Heart left ventricle (tissue), 16 donors: ENCODE measurements at regions of chr3 and their contacts with region 1.

Region 1: DNA sequence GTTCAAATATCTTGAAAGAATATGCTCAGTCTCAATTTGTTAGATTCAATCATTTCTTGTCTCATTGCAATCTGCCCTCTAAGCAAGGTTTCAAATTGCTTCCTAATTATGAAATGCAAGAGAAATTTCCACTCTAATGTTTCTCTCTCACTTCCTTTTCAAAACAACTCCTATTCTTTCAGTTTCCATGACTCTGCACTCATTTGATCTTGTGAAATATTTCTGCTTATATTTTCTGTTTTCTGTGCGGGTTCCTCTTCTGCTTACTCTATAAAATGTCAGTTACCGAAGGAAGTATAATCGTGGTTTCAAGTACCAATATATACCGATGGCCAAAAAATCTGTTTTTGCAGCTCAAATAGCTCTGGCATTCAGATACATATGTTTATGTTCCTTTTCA is 521.9 kb upstream of the NAALADL2 start:
- DNase-seq: no peak
- ATAC-seq: peak in 2 of 4 donors; percentile 46 to 65
- H3K4me3 ChIP-seq: no peak overlapping the region
- H3K27ac ChIP-seq: peak overlapping the region in 3 of 12 donors; percentile 25 to 82 (median 35)
- H3K4me1 ChIP-seq: peaks cover 0 to 14% (median 0%) of the 10 kb centered on the region in 12 donors
- H3K27me3 ChIP-seq: no peaks in the 10 kb centered on the region
- CTCF ChIP-seq: no peak
- POLR2A ChIP-seq: no peak

Region 2: DNA sequence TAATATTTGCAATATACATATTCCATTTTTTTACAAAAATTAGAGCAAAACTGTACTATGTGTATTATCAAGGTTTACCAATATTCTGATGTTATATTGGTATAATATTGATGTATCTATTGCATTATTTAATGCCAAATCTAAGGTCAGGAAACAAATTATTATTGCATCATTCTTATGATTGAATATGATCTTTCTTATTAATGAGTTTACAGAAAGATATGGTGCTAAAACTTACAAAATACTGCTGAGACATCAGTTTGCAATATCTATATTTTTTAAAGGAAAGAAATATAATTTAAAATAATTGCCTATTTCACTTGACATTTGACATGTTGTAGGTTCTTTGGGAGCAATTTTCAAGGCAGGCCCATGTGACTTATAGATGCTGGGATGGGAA is 582.1 kb before region 1 on chr3:
- intact Hi-C with region 1: loop called in 1 of 10 experiments (anchors 5 kb)
- DNase-seq: no peak
- ATAC-seq: no peak
- H3K4me3 ChIP-seq: no peak overlapping the region
- H3K27ac ChIP-seq: no peak overlapping the region
- H3K4me1 ChIP-seq: no peaks in the 10 kb centered on the region
- H3K27me3 ChIP-seq: no peaks in the 10 kb centered on the region
- CTCF ChIP-seq: no peak
- POLR2A ChIP-seq: no peak

Region 3: DNA sequence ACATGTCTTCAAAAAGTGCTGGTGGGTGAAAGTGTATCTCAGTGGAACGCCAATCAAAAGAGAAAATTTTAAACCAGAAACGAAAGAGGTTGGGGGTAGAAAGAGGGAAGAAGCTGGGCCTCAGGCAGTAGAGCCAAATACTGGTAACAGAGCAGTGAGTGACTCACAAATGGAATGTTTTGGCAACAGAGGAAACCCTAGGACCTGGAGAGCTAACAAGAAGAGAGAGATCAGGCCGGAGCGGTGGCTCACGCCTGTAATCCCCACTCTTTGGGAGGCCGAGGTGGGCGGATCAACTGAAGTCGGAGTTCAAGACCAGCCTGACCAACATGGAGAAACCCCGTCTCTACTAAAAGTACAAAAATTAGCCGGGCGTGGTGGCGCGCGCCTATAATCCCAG is 71.1 kb after region 1 on chr3:
- intact Hi-C with region 1: no loop called
- DNase-seq: peak in 1 of 5 donors; percentile 32
- ATAC-seq: no peak
- H3K4me3 ChIP-seq: no peak overlapping the region
- H3K27ac ChIP-seq: no peak overlapping the region
- H3K4me1 ChIP-seq: no peaks in the 10 kb centered on the region
- H3K27me3 ChIP-seq: no peaks in the 10 kb centered on the region
- CTCF ChIP-seq: no peak
- POLR2A ChIP-seq: no peak

Region 4: DNA sequence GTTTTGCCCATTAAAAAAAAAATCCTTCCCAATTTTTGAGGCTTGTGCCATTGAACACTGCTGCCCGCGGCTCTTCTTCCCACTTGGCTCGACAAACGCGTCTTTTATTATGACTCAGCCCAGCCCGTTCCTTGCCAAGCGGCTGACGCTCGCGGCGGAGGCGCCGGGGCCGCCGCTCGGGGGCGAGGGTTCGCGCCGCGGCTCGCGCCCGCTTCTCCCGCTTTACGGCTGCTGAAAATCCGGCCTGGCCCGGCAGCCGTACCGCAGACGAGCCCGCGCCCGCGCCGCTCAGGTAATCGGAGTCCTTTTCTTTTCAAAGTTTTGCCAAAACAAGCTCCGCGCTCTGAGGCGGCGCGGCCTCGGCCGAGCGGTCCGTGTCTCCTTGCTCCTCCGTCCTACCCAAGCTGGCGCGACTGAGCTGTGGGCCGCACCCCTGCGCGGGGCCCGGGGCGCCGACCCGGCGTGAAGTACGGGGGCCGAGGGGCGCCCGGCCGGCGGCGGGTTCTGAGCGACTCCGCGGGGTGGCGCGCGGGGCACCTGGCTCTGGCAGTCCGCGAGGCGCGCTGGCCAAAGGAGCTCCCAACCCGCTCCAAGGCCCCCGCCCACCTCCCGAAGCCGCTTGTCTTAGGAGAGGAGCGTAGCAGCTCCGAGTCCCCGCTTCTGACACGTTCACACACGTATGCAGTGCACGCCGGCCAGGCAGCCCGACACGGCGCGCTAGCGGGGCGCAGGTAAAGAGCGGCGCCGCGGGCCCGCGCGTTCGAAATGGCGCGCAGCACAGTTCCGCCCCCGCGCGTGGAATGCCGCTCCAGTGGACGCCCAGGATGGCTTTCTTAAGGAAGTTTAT is 103.7 kb after region 1 on chr3:
- intact Hi-C with region 1: no loop called
- DNase-seq: peak; percentile 85 to 90 (median 89)
- ATAC-seq: peak; percentile 68 to 93 (median 84)
- H3K4me3 ChIP-seq: peak overlapping the region; percentile 65 to 84 (median 74)
- H3K27ac ChIP-seq: peak overlapping the region; percentile 88 to 98 (median 96)
- H3K4me1 ChIP-seq: peaks cover 0 to 29% (median 9%) of the 10 kb centered on the region in 12 donors
- H3K27me3 ChIP-seq: no peaks in the 10 kb centered on the region
- CTCF ChIP-seq: peak in 2 of 12 donors; percentile 25 to 30
- POLR2A ChIP-seq: no peak